Activated CD4-positive, alpha-beta memory T cell treated with anti-CD3 and anti-CD28 coated beads for 36 hours (primary cell): ENCODE measurements at regions of chr7 and their contacts with region 1.

Region 1: DNA sequence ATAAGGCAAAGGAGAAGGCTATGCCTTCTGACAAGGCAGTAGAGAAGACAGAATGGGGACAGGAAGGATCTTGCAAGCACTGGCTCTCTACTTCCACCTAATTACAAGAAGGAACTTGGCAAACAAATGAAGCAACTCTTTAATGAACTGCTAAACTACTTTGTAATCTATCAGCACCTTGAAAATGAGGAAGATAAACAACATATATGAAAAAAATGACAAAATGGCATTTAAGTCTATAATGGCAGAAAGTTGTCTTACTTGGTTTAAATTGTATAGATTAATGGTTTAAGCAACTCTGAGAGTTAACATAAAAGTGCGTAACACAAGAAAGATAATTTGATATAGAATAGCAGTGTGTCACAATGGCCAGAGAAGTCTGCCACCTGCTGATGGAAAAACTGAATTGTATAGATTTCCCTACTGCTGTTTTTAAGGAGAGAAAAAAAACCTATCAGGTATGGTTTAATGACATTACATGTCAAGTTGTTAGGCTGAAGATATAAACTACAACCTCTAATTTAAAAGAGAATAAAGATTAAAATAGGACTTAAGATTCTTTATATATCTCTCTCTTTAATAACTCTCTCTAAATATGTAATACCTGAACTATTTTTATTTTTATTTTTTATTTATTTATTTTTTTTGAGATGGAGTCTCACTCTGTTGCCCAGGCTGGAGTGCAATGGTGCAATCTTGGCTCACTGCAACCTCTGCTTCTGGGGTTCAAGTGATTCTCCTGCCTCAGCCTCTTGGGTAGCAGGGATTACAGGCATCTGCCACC is 11.8 kb downstream of the NT5C3A start:
- DNase-seq: no peak
- H3K4me3 Mint-ChIP-seq: no peak overlapping the region
- H3K27ac Mint-ChIP-seq: no peak overlapping the region
- H3K4me1 Mint-ChIP-seq: peaks cover 44% of the 10 kb centered on the region
- H3K27me3 Mint-ChIP-seq: no peaks in the 10 kb centered on the region

Region 2: DNA sequence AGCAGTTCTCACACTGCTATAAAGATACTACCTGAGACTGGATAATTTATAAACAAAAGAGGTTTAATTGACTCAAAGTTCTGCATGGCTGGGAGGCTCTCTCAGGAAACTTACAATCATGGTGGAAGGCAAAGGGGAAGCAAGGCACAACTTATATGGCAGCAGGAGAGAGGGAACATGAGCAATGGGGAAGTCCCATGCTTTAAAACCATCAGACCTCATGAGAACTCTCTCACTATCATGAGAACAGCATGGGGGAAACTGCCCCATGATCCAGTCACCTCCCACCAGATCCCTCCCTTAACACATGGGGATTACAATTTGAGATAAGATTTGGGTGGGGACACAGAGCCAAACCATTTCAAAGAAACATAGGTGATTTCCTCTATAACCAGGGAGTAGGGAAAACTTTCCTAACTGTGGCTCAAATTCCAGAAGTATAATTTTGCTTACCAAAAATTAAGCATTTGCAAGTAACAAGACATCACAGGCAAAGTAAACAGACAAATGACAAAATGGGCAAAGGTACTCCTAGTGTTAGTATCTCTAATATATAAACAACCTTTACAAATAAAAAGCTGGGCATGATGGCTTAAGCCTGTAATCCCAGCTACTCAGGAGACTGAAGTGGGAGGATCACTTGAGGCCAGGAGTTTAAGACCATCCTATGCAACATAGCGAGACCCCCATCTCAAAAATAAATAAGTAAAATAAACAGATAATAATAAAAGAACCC is 247.2 kb before region 1 on chr7:
- CTCF ChIA-PET with region 1: interaction called, 5 read pairs
- POLR2A ChIA-PET with region 1: no interaction called
- intact Hi-C with region 1: loop called (anchors 5 kb)
- DNase-seq: no peak
- H3K4me3 Mint-ChIP-seq: no peak overlapping the region
- H3K27ac Mint-ChIP-seq: no peak overlapping the region
- H3K4me1 Mint-ChIP-seq: no peaks in the 10 kb centered on the region
- H3K27me3 Mint-ChIP-seq: no peaks in the 10 kb centered on the region

Region 3: DNA sequence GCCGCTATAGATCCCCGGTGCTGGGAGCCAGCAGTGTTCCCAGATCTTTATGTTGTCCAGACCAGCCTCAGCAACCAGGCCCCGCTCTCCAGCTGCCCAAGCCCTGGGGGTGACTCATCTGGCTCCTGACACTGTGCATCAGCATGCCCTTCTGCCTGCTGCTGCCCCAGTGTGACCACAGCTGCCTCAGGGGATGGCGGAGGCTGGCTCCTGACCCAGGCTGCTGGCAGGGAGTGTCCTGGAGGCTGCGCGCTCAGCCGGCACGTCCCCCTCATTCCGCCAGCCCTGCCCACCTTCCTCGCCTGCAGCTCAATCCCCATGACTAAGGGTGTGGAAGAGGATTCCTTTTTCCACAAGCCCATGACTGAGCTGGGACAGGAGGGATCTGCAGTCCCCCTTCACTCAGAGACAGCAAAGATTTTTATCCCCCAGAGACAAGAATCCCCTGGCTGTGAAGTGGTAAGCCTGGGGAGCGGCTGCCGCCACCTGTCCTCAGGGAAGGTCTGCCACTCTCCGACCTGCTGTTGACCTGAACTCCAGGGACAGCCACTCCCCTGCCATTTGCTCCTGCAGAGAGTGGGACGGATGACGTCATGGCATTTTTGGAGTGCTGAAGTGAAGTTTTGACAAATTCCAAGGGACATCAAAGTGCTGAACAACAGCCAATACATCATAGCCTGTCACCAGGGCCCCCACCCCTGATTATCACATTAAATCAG is 671.8 kb after region 1 on chr7:
- CTCF ChIA-PET with region 1: no interaction called
- POLR2A ChIA-PET with region 1: no interaction called
- intact Hi-C with region 1: no loop called
- DNase-seq: no peak
- H3K4me3 Mint-ChIP-seq: no peak overlapping the region
- H3K27ac Mint-ChIP-seq: no peak overlapping the region
- H3K4me1 Mint-ChIP-seq: no peaks in the 10 kb centered on the region
- H3K27me3 Mint-ChIP-seq: no peaks in the 10 kb centered on the region